ENCODE measurements at regions of chr4 and their contacts with region 1.

Region 1: DNA sequence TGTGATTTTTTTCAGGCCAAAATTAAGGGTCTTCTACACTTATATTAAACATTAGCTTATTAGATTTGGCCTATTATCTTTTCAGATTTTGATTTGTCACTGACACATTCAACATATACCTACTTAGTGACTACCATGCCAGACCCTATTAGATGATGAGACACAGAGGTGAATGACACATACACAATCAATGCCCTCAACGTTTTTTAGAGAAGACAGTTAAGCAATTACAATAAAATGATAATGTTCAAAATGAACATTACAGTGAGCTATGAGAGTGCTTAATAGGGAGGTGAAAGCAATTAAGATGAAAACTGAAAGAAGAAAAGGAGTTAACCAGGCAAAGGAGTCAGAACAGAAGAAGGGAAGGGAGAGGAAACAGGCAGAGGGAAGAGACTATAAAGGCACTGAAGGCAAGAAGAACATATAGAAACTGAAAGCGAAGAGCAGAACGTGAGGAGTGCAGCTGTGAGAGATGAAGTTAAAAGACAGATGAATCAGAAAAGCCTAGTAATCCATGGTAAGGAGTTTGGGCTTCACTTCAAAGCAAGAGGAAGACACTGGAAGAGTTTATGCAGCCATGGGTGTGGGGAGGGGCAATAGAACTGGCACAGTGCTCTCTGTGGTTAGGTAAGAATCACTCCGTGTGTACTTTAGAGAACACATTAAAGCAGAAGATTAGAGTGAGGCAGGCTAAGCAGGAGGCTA is 119.0 kb downstream of the REELD1 start:
- DNase-seq: no peak
- ATAC-seq: peak in 1 of 4 donors; percentile 27
- H3K4me3 ChIP-seq: no peak overlapping the region
- H3K27ac ChIP-seq: no peak overlapping the region
- H3K4me1 ChIP-seq: peaks cover 5 to 12% (median 8%) of the 10 kb centered on the region in 3 donors
- H3K27me3 ChIP-seq: no peaks in the 10 kb centered on the region
- CTCF ChIP-seq: no peak

Region 2: DNA sequence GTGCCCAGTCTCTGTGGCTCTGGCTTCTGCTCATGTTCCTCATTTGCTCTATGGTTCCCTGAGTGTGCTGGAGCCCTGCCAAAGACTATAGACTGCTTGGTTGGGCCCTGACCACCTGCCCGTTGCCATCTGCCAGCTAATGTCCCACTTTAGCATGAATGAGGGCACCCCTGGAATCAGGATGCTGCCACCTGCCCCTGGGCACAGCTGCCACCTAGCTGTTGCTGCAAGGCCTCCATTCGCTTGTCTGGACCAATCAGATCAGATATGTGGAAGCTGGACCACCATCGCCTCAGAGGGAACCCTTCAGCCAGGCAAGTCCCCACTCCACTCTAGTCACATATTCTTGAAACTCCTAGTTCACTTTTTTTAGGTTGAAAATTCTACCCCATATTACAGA is 566.4 kb after region 1 on chr4:
- intact Hi-C with region 1: loop called in 1 of 3 experiments (anchors 10 kb)
- DNase-seq: no peak
- ATAC-seq: no peak
- H3K4me3 ChIP-seq: no peak overlapping the region
- H3K27ac ChIP-seq: no peak overlapping the region
- H3K4me1 ChIP-seq: no peaks in the 10 kb centered on the region
- H3K27me3 ChIP-seq: peaks cover 0 to 5% (median 0%) of the 10 kb centered on the region in 4 donors
- CTCF ChIP-seq: no peak

Region 3: DNA sequence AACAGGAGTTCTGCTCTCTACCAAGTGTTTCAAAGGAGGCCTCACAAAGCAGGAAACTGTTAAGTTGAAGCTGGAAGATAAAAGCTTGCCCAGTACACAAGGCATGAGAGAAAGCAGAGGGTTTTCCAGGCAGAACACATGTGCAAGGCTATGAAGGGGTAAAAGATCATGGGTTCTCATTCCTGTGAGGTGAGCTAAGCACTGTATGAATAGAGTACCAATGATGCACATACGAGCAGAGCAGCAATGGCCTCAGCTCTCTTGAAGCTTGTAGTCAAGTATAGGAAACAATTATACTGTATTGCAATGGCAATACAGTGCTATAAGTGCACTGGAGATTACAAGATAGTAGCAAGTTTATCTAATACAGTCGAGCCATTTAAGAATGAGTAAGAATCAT is 594.4 kb after region 1 on chr4:
- intact Hi-C with region 1: loop called in 1 of 3 experiments (anchors 10 kb)
- DNase-seq: no peak
- ATAC-seq: no peak
- H3K4me3 ChIP-seq: no peak overlapping the region
- H3K27ac ChIP-seq: no peak overlapping the region
- H3K4me1 ChIP-seq: no peaks in the 10 kb centered on the region
- H3K27me3 ChIP-seq: peaks cover 0 to 6% (median 0%) of the 10 kb centered on the region in 4 donors
- CTCF ChIP-seq: no peak

Measured in pancreas (tissue), 10 donors.